Endothelial cell of umbilical vein (primary cell): ENCODE measurements at regions of chr17 and their contacts with region 1.

Region 1: GRCh38 chr17:7716901-7717755 is at the start of gene DNAH2:
- DNase-seq: peak; percentile 81
- H3K4me3 ChIP-seq: peak within 1 kb of the TSS; percentile 53 to 69 (median 63)
- H3K27ac ChIP-seq: no peak within 1 kb of the TSS
- H3K4me1 ChIP-seq: peaks cover 5% of the 10 kb centered on the region
- H3K27me3 ChIP-seq: peaks cover 23 to 29% of the 10 kb centered on the region in 2 experiments
- CTCF ChIP-seq: peak; percentile 35 to 66
- POLR2A ChIP-seq: no peak
- total RNA-seq, gene DNAH2: 0.11 TPM in 1 of 2 replicates, not detected in the other

Region 2: GRCh38 chr17:7413346-7413985 is 303.7 kb before region 1 on chr17:
- CTCF ChIA-PET with region 1: no interaction called
- POLR2A ChIA-PET with region 1: no interaction called
- dilution Hi-C with region 1: no loop called
- intact Hi-C with region 1: no loop called
- DNase-seq: no peak
- H3K4me3 ChIP-seq: no peak overlapping the region
- H3K27ac ChIP-seq: no peak overlapping the region
- H3K4me1 ChIP-seq: no peaks in the 10 kb centered on the region
- H3K27me3 ChIP-seq: no peaks in the 10 kb centered on the region
- CTCF ChIP-seq: no peak
- POLR2A ChIP-seq: no peak

Region 3: DNA sequence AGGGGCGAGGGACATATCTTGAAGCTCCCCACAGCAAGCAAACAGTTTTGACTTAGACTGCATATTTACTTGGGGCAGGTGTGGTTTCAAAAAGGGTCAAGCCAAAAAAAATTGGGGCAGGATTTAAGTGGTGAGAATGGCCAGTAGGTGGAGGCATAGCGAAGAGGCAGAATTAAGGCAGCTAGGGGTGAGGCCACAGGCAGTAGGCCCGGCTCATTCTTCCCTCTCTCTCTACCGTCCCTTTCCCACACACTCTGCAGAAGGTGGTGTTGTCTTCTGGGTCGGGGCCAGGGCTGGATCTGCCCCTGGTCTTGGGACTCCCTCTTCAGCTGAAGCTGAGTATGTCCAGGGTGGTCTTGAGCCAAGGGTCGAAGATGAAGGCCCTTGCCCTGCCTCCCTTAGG is 84.6 kb before region 1 on chr17:
- CTCF ChIA-PET with region 1: interaction called, 11 read pairs
- POLR2A ChIA-PET with region 1: no interaction called
- dilution Hi-C with region 1: no loop called
- intact Hi-C with region 1: loop called (anchors 1 kb)
- DNase-seq: peak; percentile 24
- H3K4me3 ChIP-seq: no peak overlapping the region
- H3K27ac ChIP-seq: no peak overlapping the region
- H3K4me1 ChIP-seq: no peaks in the 10 kb centered on the region
- H3K27me3 ChIP-seq: no peaks in the 10 kb centered on the region
- CTCF ChIP-seq: peak; percentile 41 to 49
- POLR2A ChIP-seq: no peak

Region 4: DNA sequence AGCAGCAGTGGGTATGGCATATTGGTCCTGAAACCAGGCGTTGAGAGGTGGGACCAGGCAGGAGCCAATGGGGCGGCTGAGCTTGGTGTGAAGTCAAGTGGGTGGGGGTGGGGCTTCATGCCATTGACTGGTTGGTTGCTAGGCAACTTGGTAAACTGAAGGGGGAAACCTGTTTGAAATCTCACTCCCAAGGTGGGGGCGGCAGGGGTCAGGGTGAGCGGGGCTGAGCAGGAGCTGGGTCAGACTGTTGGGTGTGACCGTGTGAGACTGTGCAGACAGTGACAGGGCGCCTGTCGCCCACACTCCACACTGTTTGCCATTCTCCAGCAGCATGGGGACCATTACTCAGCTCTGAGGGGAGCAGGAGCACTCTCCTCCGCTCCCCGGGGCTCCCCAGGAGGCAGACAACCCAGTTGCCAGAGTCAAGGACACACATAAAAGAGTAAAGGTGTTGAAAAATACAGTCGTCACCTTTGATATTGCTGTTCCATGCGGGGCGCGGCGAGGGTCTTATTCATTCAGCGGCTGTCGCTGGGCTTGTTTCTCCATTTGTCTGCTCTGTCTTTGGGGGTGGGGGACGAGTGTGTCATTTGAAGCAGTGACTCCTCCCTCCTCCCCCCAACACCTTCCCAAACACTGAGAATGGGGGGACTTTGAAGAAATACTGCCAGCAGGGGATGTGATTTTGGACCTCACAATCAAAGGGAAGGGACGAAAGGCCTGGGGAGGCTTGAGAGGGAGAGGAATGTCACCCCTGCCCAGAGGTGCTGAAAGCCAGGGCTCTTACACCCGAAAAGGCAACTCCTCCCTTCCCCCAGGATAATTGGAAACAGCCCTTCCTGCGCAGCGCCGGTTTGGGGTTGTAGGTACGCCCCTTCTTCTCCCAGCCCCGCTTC is 13.3 kb before region 1 on chr17:
- CTCF ChIA-PET with region 1: interaction called, 45 read pairs
- POLR2A ChIA-PET with region 1: no interaction called
- dilution Hi-C with region 1: no loop called
- intact Hi-C with region 1: loop called (anchors 1 kb)
- DNase-seq: peak; percentile 22
- H3K4me3 ChIP-seq: no peak overlapping the region
- H3K27ac ChIP-seq: no peak overlapping the region
- H3K4me1 ChIP-seq: peaks cover 3% of the 10 kb centered on the region
- H3K27me3 ChIP-seq: peaks cover 33 to 35% of the 10 kb centered on the region in 2 experiments
- CTCF ChIP-seq: no peak
- POLR2A ChIP-seq: no peak